ENCODE measurements at regions of chr15 and their contacts with region 1.

Region 1: DNA sequence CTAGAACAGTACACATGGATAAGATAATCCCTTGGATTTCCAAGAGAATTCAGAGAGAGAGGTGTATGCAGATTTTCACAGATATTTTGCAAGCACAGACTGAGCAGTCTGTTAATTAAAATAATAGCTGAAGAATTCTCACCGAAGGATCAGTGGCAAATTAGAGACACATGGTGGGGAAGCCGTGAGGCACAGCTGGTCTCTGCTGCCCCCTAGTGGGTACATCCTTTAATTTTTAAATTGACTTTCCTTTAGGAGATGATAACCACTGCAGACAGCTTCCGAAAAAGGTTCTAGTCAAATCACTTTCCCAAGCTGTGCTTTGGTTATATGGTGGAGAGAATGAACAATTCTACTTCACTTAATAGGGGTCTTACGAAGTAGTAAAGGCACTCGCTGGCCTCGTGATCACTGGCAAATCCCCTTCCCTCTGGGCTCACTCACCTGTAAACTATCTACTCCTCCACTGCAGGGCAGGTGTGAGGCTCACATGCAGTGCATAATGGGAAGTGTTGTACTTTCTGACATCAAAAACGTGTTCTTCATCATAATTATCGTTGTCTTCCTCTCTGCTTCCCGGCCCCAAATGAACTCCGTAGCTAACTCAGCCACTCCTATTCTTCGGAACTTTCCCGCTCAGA is 19.5 kb downstream of the MESD start:
- DNase-seq: peak; percentile 49 to 59
- H3K4me3 ChIP-seq: no peak overlapping the region
- H3K27ac ChIP-seq: no peak overlapping the region
- H3K4me1 ChIP-seq: peaks cover 32% of the 10 kb centered on the region
- H3K27me3 ChIP-seq: no peaks in the 10 kb centered on the region
- CTCF ChIP-seq: peak; percentile 95

Region 2: DNA sequence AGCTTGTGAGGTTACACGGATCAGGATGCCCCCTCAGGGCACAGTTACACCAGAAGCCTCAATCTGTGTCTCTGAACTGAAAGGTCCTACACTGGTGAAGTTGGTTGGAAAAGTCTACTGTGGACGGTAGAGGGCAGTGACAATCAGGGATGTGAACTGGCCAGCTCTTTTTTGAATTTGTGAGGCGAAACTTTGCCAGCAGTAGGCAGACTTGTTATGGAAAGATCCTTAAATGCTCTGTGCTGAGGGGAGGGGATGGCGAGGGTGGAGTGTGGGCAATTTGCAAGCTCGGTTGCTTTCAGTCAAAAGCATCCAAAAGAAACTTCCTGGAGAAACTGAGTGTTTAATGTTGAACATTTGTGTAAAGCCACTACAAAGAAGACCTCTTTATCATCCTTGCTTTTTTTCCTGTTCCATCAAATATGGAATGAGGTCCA is 402.4 kb before region 1 on chr15:
- CTCF ChIA-PET with region 1: interaction called, 4 read pairs
- POLR2A ChIA-PET with region 1: no interaction called
- intact Hi-C with region 1: loop called (anchors 1 kb)
- DNase-seq: peak; percentile 54 to 66
- H3K4me3 ChIP-seq: no peak overlapping the region
- H3K27ac ChIP-seq: no peak overlapping the region
- H3K4me1 ChIP-seq: 0 out of 2 replicates have a peak, but pooled peaks cover 4% of the 10 kb centered on the region
- H3K27me3 ChIP-seq: no peaks in the 10 kb centered on the region
- CTCF ChIP-seq: peak; percentile 80

Region 3: DNA sequence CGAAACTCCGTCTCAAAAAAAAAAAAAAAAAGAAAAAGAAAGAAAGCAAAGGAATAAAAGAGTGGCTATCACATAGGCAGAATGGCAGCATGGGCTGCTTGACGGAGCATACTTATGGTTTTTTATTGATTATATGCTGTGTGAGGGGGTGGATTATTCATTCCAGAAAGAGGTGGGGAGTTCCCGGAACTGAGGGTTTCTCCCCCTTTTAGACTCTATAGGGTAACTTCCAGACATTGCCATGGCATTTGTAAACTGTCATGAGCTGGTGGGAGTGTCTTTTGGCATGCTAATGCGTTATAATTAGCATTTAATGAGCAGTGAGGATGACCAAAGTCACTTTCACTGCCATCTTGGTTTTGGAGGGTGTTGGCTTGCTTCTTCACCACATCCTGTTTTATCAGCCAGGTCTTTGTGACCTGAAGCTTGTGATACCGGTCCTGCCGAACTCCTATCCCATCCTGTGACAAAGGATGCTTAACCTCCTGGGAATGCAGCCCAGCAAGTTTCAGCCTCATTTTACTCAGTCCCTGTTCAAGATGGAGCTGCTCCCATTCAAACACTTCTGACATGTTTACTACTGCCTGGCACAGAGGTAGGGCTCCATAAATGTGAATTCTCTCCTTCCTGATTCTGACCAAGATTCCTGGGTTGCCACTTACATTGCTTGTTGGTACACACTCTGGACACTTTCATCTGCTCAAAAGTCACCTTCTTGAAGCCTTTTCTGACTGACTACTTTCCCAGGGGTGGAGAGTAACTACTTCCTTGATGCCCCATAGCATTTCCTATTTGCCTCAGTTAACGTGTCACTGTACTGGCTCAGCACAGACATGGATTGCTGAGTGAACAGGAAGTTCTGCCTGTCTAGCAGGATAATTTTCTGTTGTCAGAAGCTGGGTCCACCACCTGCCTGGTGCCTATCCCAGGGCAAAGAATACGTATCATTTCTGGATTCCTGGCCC is 290.7 kb before region 1 on chr15:
- CTCF ChIA-PET with region 1: no interaction called
- POLR2A ChIA-PET with region 1: no interaction called
- intact Hi-C with region 1: loop called (anchors 5 kb)
- DNase-seq: peak; percentile 80 to 97
- H3K4me3 ChIP-seq: peak overlapping the region; percentile 27; the same call in 1 of the 2 replicates
- H3K27ac ChIP-seq: peak overlapping the region; percentile 90
- H3K4me1 ChIP-seq: peaks cover 67% of the 10 kb centered on the region
- H3K27me3 ChIP-seq: no peaks in the 10 kb centered on the region
- CTCF ChIP-seq: no peak

Region 4: GRCh38 chr15:80776420-80777045 is 193.6 kb before region 1 on chr15:
- CTCF ChIA-PET with region 1: interaction called, 9 read pairs
- POLR2A ChIA-PET with region 1: no interaction called
- intact Hi-C with region 1: loop called (anchors 1 kb)
- DNase-seq: peak in 1 of 2 experiments; percentile 14
- H3K4me3 ChIP-seq: no peak overlapping the region
- H3K27ac ChIP-seq: peak overlapping the region; percentile 90
- H3K4me1 ChIP-seq: peaks cover 50% of the 10 kb centered on the region
- H3K27me3 ChIP-seq: no peaks in the 10 kb centered on the region
- CTCF ChIP-seq: peak; percentile 66

Region 5: GRCh38 chr15:80811781-80812315 is 158.3 kb before region 1 on chr15:
- CTCF ChIA-PET with region 1: no interaction called
- POLR2A ChIA-PET with region 1: no interaction called
- intact Hi-C with region 1: no loop called
- DNase-seq: no peak
- H3K4me3 ChIP-seq: no peak overlapping the region
- H3K27ac ChIP-seq: no peak overlapping the region
- H3K4me1 ChIP-seq: no peaks in the 10 kb centered on the region
- H3K27me3 ChIP-seq: no peaks in the 10 kb centered on the region
- CTCF ChIP-seq: no peak

Region 6: DNA sequence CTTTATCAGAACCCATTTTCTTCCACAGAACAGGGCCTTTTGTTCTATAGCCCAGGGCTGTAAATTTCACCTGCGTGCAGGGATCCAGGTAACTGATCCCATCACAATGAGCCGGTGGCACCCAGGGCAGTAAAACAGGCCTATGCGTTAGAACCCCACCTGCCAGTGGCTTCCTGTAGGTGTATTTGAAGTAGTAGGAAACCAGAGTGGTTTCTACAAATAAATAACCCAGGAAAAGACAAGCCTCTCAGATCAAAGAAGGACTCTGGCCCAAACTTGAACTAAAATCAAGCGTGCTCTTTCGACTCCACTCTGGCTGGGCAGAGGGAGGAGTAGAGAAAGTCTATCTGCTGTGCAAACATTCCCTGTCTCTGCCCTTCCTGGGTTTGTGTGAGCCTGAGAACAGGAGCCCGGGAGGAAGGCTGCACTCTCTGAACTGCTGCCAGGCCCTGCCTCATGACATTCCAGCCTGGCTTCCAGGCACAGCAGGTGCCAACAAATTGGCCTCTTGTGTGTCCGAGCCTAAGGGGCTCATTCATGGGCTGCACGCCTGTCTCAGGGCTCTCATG is 113.2 kb before region 1 on chr15:
- CTCF ChIA-PET with region 1: no interaction called
- POLR2A ChIA-PET with region 1: no interaction called
- intact Hi-C with region 1: loop called (anchors 5 kb)
- DNase-seq: peak in 1 of 2 experiments; percentile 72
- H3K4me3 ChIP-seq: no peak overlapping the region
- H3K27ac ChIP-seq: peak overlapping the region; percentile 59
- H3K4me1 ChIP-seq: peaks cover 43% of the 10 kb centered on the region
- H3K27me3 ChIP-seq: no peaks in the 10 kb centered on the region
- CTCF ChIP-seq: peak; percentile 7; the same call in 1 of the 2 replicates

Region 7: GRCh38 chr15:80929225-80929624 is 40.9 kb before region 1 on chr15:
- CTCF ChIA-PET with region 1: no interaction called
- POLR2A ChIA-PET with region 1: no interaction called
- intact Hi-C with region 1: no loop called
- DNase-seq: peak in 1 of 2 experiments; percentile 33
- H3K4me3 ChIP-seq: no peak overlapping the region
- H3K27ac ChIP-seq: no peak overlapping the region
- H3K4me1 ChIP-seq: no peaks in the 10 kb centered on the region
- H3K27me3 ChIP-seq: no peaks in the 10 kb centered on the region
- CTCF ChIP-seq: no peak

Region 8: DNA sequence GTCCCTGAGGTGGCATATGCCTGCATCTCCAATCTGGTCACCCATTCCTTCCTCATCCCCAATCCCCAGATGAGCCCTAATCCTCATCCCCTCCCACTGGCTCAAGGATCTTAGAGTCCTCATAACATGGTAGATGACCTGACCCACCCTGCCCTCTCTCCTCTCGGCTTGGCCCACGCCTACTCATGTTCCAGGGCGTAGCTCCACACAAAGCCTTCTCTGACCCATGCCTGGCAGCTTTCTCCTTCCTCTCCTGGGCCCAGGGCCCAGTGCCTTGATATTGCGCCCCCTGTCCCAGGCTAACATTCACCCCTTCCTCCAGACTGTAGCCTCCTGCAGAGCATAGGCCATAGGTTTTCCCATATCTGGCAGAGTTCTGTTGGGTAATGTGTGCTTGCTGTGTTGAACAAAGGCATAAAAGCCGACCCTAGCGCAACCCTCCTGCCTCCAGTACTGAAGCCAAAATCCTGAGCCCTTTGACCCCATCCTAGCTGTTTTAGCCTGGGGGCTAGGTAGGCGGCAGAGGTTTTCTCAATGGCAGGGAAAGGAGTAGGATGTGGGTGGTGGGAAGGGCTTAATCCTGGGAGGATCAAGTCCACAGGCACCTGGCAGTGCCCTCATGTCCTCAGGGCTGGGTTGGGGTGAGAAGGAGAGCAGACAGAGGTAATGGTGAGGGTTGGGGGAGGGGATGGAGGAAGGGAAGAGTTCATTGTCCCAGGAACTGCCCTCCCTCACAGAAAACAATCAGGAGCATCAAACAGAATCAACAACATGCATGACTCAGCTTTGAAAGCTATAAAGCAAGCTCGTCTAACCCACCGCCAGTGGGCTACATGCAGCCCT is 16.0 kb before region 1 on chr15:
- CTCF ChIA-PET with region 1: interaction called, 4 read pairs
- POLR2A ChIA-PET with region 1: interaction called, 3 read pairs
- intact Hi-C with region 1: loop called (anchors 1 kb)
- DNase-seq: peak; percentile 66 to 77
- H3K4me3 ChIP-seq: no peak overlapping the region
- H3K27ac ChIP-seq: peak overlapping the region; percentile 82
- H3K4me1 ChIP-seq: peaks cover 49% of the 10 kb centered on the region
- H3K27me3 ChIP-seq: no peaks in the 10 kb centered on the region
- CTCF ChIP-seq: no peak

Measured in PC-9 (cell line).